ENCODE measurements at regions of chr5 and their contacts with region 1.

Region 1: GRCh38 chr5:15013654-15014463 is 142.3 kb upstream of the ANKH start:
- DNase-seq: no peak
- H3K4me3 ChIP-seq: no peak overlapping the region
- H3K27ac ChIP-seq: no peak overlapping the region
- H3K4me1 ChIP-seq: peaks cover 6 to 14% of the 10 kb centered on the region in 2 donors
- H3K27me3 ChIP-seq: no peaks in the 10 kb centered on the region
- CTCF ChIP-seq: peak; percentile 56 to 73 (median 62)

Region 2: DNA sequence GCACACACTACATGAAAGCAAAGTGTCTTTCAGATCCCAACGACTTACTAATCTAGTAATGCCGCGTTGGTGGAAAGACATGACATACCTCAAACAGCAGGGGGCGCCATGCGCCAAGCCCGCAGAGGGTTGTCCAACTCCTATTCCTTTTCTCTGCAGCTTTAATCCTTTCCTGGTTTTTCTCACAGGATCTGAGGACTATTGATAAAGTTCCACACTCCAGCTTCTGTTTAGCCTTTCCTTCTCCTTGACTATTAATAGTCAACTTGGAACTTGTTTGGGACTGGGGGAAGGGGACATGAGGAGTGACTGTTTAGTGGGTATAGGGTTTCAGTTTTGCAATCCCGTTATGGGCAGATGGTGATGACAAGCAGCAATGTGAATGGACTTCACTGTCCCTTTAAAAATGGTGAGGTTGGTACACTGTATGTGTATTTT is 286.4 kb before region 1 on chr5:
- intact Hi-C with region 1: loop called (anchors 1 kb)
- DNase-seq: peak in 1 of 2 donors; percentile 88
- H3K4me3 ChIP-seq: no peak overlapping the region
- H3K27ac ChIP-seq: peak overlapping the region in 1 of 2 donors; percentile 58
- H3K4me1 ChIP-seq: peaks cover 2 to 16% of the 10 kb centered on the region in 2 donors
- H3K27me3 ChIP-seq: no peaks in the 10 kb centered on the region
- CTCF ChIP-seq: peak; percentile 91 to 93 (median 92)

Region 3: GRCh38 chr5:14946815-14947640 is 66.8 kb before region 1 on chr5:
- intact Hi-C with region 1: loop called (anchors 5 kb)
- DNase-seq: no peak
- H3K4me3 ChIP-seq: no peak overlapping the region
- H3K27ac ChIP-seq: no peak overlapping the region
- H3K4me1 ChIP-seq: no peaks in the 10 kb centered on the region
- H3K27me3 ChIP-seq: no peaks in the 10 kb centered on the region
- CTCF ChIP-seq: peak; percentile 3 to 37 (median 31)

Measured in ascending aorta (tissue), 2 donors.